WTC11 (cell line): ENCODE measurements at regions of chr3 and their contacts with region 1.

Region 1: GRCh38 chr3:9503283-9503682 is 50.3 kb downstream of the LHFPL4 start:
- DNase-seq: peak; percentile 95
- ATAC-seq: peak; percentile 61
- H3K4me3 Mint-ChIP-seq: no peak overlapping the region; the same call in 1 of the 2 replicates
- H3K27ac Mint-ChIP-seq: no peak overlapping the region
- H3K4me1 Mint-ChIP-seq: peaks cover 12% of the 10 kb centered on the region
- H3K27me3 Mint-ChIP-seq: peaks cover 51% of the 10 kb centered on the region
- CTCF ChIP-seq: peak; percentile 96

Region 2: DNA sequence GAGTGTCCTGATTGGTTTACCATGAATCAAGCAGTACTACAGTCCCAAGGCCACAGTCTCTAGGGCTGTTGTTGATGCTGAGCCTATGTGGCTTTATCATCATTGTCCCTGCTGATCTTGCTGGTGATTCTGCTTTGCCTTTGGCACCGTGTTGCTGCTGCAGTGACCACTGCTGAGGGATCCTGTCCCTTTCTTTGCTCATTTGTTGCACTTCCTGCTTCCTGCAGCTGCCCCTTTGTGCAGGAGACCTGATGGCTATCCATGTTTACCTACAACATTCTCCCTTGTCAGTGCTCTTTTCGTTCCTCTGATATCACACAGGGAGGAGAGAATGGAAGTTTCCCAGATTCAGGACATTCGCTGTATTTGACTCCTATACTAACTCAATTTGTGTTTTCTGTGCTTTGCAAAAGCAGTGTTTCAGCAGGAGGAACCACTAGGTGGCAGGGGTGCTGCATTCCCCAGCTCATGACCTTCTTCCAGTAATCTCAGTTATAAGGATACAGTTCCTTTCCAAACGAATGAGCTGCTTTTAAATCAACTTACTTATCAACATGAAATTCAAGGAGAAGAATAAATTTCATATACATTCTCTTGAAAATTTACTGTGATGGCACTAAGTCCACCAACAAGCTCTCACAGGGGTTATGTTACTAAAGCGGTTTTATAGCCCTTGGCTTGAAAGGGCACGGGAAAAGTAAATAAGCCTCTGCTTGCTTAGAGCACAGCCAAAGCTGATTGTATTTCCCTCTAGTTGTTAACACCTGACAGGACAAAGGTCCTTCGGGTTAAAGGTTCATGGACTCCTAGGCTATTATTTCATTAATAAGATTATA is 150.1 kb before region 1 on chr3:
- CTCF ChIA-PET with region 1: interaction called, 18 read pairs
- POLR2A ChIA-PET with region 1: no interaction called
- DNase-seq: peak; percentile 72
- ATAC-seq: peak; percentile 74
- H3K4me3 Mint-ChIP-seq: peak overlapping the region; percentile 45; the same call in 1 of the 2 replicates
- H3K27ac Mint-ChIP-seq: peak overlapping the region; percentile 97
- H3K4me1 Mint-ChIP-seq: peaks cover 46% of the 10 kb centered on the region
- H3K27me3 Mint-ChIP-seq: no peaks in the 10 kb centered on the region
- CTCF ChIP-seq: peak; percentile 68

Region 3: DNA sequence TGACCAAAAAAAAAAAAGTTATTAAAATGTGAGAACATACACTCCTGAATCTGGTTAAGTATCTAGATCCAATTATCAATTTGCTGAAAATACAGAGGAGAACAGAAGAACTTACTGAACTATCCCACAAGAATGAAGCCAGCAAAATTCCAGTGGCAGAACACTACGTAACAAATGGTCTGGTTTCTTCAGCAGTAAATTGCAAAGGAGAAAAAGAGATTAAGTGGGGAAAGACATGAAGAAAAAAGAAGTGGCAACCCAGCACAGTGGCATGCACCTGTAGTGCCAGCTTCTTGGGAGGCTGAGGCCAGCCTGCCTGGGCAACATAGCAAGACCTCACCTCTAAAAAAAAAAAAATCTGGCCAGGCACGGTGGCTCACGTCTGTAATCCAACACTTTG is 11.8 kb before region 1 on chr3:
- CTCF ChIA-PET with region 1: interaction called, 12 read pairs
- POLR2A ChIA-PET with region 1: no interaction called
- DNase-seq: no peak
- ATAC-seq: no peak
- H3K4me3 Mint-ChIP-seq: no peak overlapping the region
- H3K27ac Mint-ChIP-seq: no peak overlapping the region
- H3K4me1 Mint-ChIP-seq: no peaks in the 10 kb centered on the region
- H3K27me3 Mint-ChIP-seq: peaks cover 71% of the 10 kb centered on the region
- CTCF ChIP-seq: no peak

Region 4: GRCh38 chr3:9552252-9552999 is 49.1 kb after region 1 on chr3:
- CTCF ChIA-PET with region 1: interaction called, 22 read pairs
- POLR2A ChIA-PET with region 1: interaction called, 3 read pairs
- DNase-seq: peak; percentile 92
- ATAC-seq: peak; percentile 72
- H3K4me3 Mint-ChIP-seq: peak overlapping the region; percentile 95
- H3K27ac Mint-ChIP-seq: no peak overlapping the region
- H3K4me1 Mint-ChIP-seq: peaks cover 26% of the 10 kb centered on the region
- H3K27me3 Mint-ChIP-seq: peaks cover 31% of the 10 kb centered on the region
- CTCF ChIP-seq: no peak

Region 5: DNA sequence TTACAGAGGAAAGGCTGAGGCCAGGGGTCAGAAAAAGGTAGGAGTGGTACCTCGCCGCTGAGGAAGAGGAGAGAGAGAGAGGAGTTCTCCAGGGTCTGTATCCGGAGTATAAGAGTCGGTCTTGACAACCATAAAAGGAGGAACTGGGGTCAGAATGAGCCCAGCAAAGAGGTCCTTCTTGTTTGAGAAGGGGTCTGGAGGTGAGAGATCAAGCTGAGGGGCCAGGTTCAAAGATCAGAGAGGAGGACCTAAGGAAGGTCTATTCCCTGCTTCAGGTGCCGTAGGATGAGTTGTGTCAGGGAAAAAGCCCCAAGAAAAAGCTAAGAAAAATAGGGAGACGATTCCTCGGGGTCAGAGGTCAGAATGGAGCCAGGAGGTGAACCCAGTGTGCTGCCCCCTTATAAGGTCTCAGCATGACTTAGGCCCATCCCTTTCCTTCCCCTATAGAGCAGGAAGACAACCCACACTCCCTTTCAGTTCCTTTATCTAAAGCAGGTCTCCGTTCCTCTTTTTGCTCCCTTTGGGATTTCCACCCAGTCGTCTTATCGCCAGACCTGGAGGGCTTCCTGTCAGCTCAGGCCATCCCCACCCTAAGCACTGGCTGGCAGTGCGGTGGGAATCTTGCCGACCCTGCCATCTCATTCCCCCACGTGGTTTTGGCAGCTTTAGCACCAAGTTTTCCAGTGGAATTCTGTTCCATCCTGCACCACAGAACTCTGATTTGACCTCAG is 146.7 kb after region 1 on chr3:
- CTCF ChIA-PET with region 1: interaction called, 10 read pairs
- POLR2A ChIA-PET with region 1: interaction called, 3 read pairs
- DNase-seq: no peak
- ATAC-seq: no peak
- H3K4me3 Mint-ChIP-seq: peak overlapping the region; percentile 97
- H3K27ac Mint-ChIP-seq: peak overlapping the region; percentile 80
- H3K4me1 Mint-ChIP-seq: peaks cover 14% of the 10 kb centered on the region
- H3K27me3 Mint-ChIP-seq: no peaks in the 10 kb centered on the region
- CTCF ChIP-seq: no peak

Region 6: GRCh38 chr3:9749645-9750555 is 246.6 kb after region 1 on chr3 and contains the start of gene OGG1:
- CTCF ChIA-PET with region 1: interaction called, 12 read pairs
- POLR2A ChIA-PET with region 1: no interaction called
- DNase-seq: peak; percentile 96
- ATAC-seq: peak; percentile 96
- H3K4me3 Mint-ChIP-seq: peak within 1 kb of the TSS; percentile 98
- H3K27ac Mint-ChIP-seq: peak within 1 kb of the TSS; percentile 99
- H3K4me1 Mint-ChIP-seq: peaks cover 11% of the 10 kb centered on the region
- H3K27me3 Mint-ChIP-seq: no peaks in the 10 kb centered on the region
- CTCF ChIP-seq: no peak
- total RNA-seq, gene OGG1: 23.6 to 27.3 TPM (median 26.7 TPM) in 3 replicates